Activated naive CD8-positive, alpha-beta T cell treated with anti-CD3 and anti-CD28 coated beads, Interleukin-2, amount 10 ng/mL, durations not matched to agents 7 days and 5 days (primary cell): ENCODE measurements at regions of chr17 and their contacts with region 1.

Region 1: GRCh38 chr17:30116661-30117551 is at the start of gene NSRP1:
- DNase-seq: peak; percentile 93
- ATAC-seq: peak; percentile 92
- H3K4me3 Mint-ChIP-seq: peak within 1 kb of the TSS; percentile 97
- H3K27ac Mint-ChIP-seq: peak within 1 kb of the TSS; percentile 99
- H3K4me1 Mint-ChIP-seq: peaks cover 50% of the 10 kb centered on the region
- H3K27me3 Mint-ChIP-seq: no peaks in the 10 kb centered on the region
- total RNA-seq, gene NSRP1: 26.4 to 27.1 TPM

Region 2: DNA sequence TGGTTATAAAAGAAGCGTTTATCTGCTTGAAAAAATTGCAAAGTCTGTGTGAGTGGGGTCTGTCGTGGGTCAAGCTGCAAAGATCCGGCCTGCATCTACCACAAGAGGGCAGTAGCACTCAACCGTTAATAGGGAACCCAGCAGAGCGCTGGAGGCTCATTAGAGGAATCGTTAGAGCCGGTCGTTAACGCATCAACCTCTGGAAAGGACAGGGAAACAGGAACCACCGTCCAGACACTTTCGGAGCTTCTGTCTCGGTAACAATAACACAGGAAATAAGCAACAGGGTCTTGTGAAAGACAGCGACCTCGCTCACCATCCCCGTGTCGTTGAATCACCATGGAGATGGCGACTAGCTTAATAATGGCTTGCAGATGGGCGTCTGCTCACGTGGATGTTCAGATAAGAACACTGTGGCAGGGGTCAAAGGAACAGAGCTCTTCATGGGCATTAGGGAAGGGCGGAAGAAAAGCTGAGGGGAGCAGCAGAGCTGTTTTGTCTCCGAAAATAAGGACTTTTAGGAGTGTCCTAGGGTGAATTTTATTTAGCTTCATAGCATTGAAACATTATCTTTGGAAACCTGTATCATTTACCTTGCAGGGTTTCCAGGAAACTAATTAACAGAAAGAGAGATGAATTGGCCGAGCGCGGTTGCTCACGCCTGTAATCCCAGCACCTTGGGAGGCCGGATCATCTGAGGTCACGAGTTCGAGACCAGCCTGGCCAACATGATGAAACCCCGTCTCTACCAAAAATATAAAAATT is 12.1 kb before region 1 on chr17:
- POLR2A ChIA-PET with region 1: interaction called, 10 read pairs
- DNase-seq: peak; percentile 60
- ATAC-seq: peak; percentile 91
- H3K4me3 Mint-ChIP-seq: peak overlapping the region; percentile 79
- H3K27ac Mint-ChIP-seq: no peak overlapping the region
- H3K4me1 Mint-ChIP-seq: peaks cover 4% of the 10 kb centered on the region
- H3K27me3 Mint-ChIP-seq: peaks cover 23% of the 10 kb centered on the region

Region 3: DNA sequence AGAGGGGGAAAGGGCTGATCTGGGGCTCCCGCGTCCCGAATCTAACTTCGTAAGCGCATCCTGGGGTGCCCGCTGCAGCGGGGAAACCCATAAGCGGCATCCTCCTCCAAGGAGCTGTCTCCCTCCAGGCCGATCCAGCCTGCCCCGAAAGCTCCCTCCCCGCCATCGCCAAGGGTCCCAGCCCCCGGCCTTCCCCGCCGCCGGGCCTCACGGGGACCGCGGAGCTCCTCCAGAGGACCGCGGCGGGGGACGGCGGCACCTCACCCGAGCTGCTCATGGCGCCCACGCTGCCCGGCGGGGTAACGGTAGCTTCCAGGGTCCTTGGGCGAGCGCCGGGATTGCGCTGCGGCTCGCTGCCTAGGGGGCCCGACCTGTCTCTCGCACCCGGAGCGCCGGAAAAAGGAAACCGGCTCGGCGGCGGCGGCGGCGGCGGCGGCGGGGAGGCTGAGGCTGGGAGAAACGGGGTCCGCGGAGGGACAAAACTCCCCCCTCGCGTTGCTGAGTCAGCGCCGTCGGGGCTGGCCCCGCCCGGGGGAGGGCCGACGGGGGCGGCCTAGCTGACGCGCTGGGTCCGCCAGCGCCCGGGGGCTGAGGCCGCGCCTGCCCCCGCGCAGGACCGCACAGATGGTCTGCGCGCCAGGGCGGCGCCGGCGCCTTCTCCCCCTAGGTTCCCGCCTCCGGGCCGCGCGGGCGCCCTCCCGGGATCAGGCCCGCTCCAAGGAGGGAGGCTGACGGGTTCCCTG is 174.8 kb after region 1 on chr17 and contains the start of gene BLMH:
- POLR2A ChIA-PET with region 1: interaction called, 11 read pairs
- DNase-seq: peak; percentile 92
- ATAC-seq: peak; percentile 90
- H3K4me3 Mint-ChIP-seq: peak within 1 kb of the TSS; percentile 94
- H3K27ac Mint-ChIP-seq: peak within 1 kb of the TSS; percentile 88
- H3K4me1 Mint-ChIP-seq: peaks cover 16% of the 10 kb centered on the region
- H3K27me3 Mint-ChIP-seq: no peaks in the 10 kb centered on the region
- total RNA-seq, gene BLMH: 61.8 to 64.1 TPM